Activated CD8-positive, alpha-beta memory T cell treated with anti-CD3 and anti-CD28 coated beads, Interleukin-2, amount 10 ng/mL, durations not matched to agents 7 days and 5 days (primary cell): ENCODE measurements at regions of chr12 and their contacts with region 1.

Region 1: GRCh38 chr12:10012630-10013330 is 2.4 kb downstream of the CLEC12B start:
- DNase-seq: no peak
- ATAC-seq: no peak
- H3K4me3 Mint-ChIP-seq: no peak overlapping the region
- H3K27ac Mint-ChIP-seq: no peak overlapping the region
- H3K4me1 Mint-ChIP-seq: no peaks in the 10 kb centered on the region
- H3K27me3 Mint-ChIP-seq: peaks cover 59% of the 10 kb centered on the region

Region 2: DNA sequence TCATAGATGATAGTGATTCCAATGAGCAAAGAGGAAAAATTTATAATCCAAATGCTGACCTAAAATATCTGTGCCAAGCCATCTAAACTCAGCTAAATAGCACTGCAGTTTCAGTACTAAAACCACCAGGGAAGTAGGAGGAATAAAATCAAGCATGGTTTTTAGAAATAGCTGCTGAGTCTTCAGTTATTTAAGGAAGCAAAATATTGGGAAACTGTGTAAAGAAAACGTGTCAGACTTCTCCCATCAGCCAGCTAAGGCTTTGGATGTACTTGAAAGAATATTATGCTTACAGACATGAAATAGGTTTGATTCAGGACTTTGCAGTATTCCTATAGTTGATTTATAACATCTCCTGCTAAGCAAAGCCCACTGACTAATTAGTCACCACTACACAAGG is 318.5 kb before region 1 on chr12:
- CTCF ChIA-PET with region 1: no interaction called
- DNase-seq: no peak
- ATAC-seq: no peak
- H3K4me3 Mint-ChIP-seq: no peak overlapping the region
- H3K27ac Mint-ChIP-seq: peak overlapping the region; percentile 29
- H3K4me1 Mint-ChIP-seq: peaks cover 63% of the 10 kb centered on the region
- H3K27me3 Mint-ChIP-seq: no peaks in the 10 kb centered on the region

Region 3: GRCh38 chr12:9940375-9940774 is 72.4 kb before region 1 on chr12:
- CTCF ChIA-PET with region 1: interaction called, 26 read pairs
- DNase-seq: no peak
- ATAC-seq: no peak
- H3K4me3 Mint-ChIP-seq: no peak overlapping the region
- H3K27ac Mint-ChIP-seq: no peak overlapping the region
- H3K4me1 Mint-ChIP-seq: peaks cover 15% of the 10 kb centered on the region
- H3K27me3 Mint-ChIP-seq: peaks cover 34% of the 10 kb centered on the region

Region 4: DNA sequence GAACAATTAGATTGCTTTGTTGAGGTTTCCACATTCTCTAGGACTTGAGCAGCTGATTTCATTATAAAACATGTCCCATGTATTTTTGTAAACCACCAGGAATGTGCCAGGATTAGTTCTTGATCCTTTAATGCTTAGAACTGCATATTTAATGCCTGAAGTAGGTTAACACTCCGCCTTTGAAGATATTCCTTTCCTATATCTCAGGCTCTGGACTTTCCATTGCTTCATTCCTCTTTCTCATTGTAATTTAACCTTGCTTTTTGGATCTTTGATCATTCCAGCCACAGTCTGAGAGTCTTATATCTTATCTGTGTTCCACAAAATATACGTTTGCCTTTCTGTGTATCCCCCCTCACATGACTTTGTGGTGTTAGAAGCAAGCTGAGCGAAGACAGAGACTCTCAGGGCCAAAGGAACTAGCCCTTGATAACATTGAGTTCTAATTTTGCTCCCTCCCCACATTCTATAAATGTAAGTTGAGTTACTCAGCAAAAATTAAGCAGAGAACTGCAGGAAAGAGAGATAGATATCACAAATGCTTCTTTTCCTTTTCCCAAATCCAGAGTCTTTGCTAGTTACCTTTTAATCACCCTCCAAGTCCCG is 11.5 kb before region 1 on chr12:
- CTCF ChIA-PET with region 1: interaction called, 17 read pairs
- DNase-seq: no peak
- ATAC-seq: no peak
- H3K4me3 Mint-ChIP-seq: no peak overlapping the region
- H3K27ac Mint-ChIP-seq: no peak overlapping the region
- H3K4me1 Mint-ChIP-seq: no peaks in the 10 kb centered on the region
- H3K27me3 Mint-ChIP-seq: peaks cover 44% of the 10 kb centered on the region

Region 5: DNA sequence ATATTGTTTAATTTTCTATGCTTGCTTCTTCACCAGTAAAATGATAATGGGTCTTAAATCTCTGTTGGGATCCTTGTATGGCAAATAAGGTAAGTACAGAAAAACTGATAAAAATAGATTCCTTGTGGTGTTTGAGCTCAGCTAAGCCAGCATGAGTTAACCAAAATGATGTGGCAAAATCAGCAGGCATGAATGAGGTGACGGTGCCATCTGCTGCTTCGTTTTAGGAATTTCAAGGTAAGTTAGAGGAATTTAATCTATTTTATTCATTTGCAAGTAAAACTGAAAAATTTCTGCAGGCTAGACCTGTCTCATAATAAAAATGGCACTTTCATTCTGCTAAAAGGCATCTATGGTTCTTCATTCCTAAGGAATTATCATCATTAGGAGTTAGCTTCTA is 127.2 kb after region 1 on chr12:
- CTCF ChIA-PET with region 1: interaction called, 14 read pairs
- DNase-seq: peak; percentile 59
- ATAC-seq: no peak
- H3K4me3 Mint-ChIP-seq: no peak overlapping the region
- H3K27ac Mint-ChIP-seq: no peak overlapping the region
- H3K4me1 Mint-ChIP-seq: peaks cover 2% of the 10 kb centered on the region
- H3K27me3 Mint-ChIP-seq: peaks cover 22% of the 10 kb centered on the region

Region 6: GRCh38 chr12:10453144-10453543 is 440.4 kb after region 1 on chr12 and contains the start of gene KLRC1:
- CTCF ChIA-PET with region 1: no interaction called
- DNase-seq: no peak
- ATAC-seq: peak; percentile 35
- H3K4me3 Mint-ChIP-seq: peak within 1 kb of the TSS; percentile 41
- H3K27ac Mint-ChIP-seq: peak within 1 kb of the TSS; percentile 61
- H3K4me1 Mint-ChIP-seq: peaks cover 14% of the 10 kb centered on the region
- H3K27me3 Mint-ChIP-seq: no peaks in the 10 kb centered on the region
- total RNA-seq, gene KLRC1: 15.9 to 17.8 TPM